AG04450 (cell line): ENCODE measurements at regions of chr17 and their contacts with region 1.

Region 1: DNA sequence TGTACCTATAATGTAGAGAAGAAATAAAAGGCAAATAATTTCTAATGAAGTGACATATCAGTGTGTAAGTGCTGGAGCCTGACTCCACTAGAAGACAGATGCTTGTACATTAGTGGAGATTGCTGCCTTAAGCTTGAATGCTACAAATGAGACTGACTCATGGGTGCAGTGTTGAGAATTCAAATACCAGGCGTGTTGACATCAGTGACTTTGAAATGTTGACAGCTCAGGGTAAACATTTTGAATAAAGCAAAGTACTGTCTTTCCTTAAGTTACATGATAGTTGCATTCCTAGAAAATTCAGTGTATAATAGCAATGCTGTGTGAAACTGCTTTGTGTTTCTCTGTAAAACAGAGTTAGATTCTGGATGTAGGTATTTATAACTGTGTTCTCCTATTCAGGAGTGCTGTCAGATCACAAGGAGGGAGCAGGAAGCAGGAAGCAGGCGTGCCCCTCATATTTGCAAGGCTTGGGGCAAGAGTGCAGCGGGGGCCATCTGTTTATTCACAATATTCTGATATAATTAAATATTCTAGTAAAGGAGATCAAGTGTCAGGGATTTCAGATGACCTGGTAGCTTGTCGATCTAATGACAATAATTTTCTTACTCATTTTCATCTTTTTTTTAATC is 119.0 kb downstream of the SPECC1 start:
- DNase-seq: peak; percentile 92
- H3K4me3 ChIP-seq: peak overlapping the region; percentile 1; the same call in 1 of the 2 replicates
- H3K27ac ChIP-seq: peak overlapping the region; percentile 80
- H3K27me3 ChIP-seq: no peaks in the 10 kb centered on the region
- CTCF ChIP-seq: no peak

Region 2: GRCh38 chr17:19263641-19264051 is 864.5 kb before region 1 on chr17:
- CTCF ChIA-PET with region 1: no interaction called
- POLR2A ChIA-PET with region 1: interaction called, 11 read pairs
- DNase-seq: no peak
- H3K4me3 ChIP-seq: no peak overlapping the region; the same call in 1 of the 2 replicates
- H3K27ac ChIP-seq: peak overlapping the region; percentile 90
- H3K27me3 ChIP-seq: no peaks in the 10 kb centered on the region
- CTCF ChIP-seq: no peak

Region 3: GRCh38 chr17:20143740-20144139 is 15.6 kb after region 1 on chr17:
- CTCF ChIA-PET with region 1: no interaction called
- POLR2A ChIA-PET with region 1: no interaction called
- DNase-seq: no peak
- H3K4me3 ChIP-seq: no peak overlapping the region
- H3K27ac ChIP-seq: no peak overlapping the region
- H3K27me3 ChIP-seq: no peaks in the 10 kb centered on the region
- CTCF ChIP-seq: no peak

Region 4: GRCh38 chr17:20155258-20156195 is 27.4 kb after region 1 on chr17:
- CTCF ChIA-PET with region 1: no interaction called
- POLR2A ChIA-PET with region 1: interaction called, 11 read pairs
- DNase-seq: peak; percentile 89
- H3K4me3 ChIP-seq: peak overlapping the region; percentile 78
- H3K27ac ChIP-seq: peak overlapping the region; percentile 47
- H3K27me3 ChIP-seq: no peaks in the 10 kb centered on the region
- CTCF ChIP-seq: no peak